ENCODE measurements at regions of chr20 and their contacts with region 1.

Region 1: DNA sequence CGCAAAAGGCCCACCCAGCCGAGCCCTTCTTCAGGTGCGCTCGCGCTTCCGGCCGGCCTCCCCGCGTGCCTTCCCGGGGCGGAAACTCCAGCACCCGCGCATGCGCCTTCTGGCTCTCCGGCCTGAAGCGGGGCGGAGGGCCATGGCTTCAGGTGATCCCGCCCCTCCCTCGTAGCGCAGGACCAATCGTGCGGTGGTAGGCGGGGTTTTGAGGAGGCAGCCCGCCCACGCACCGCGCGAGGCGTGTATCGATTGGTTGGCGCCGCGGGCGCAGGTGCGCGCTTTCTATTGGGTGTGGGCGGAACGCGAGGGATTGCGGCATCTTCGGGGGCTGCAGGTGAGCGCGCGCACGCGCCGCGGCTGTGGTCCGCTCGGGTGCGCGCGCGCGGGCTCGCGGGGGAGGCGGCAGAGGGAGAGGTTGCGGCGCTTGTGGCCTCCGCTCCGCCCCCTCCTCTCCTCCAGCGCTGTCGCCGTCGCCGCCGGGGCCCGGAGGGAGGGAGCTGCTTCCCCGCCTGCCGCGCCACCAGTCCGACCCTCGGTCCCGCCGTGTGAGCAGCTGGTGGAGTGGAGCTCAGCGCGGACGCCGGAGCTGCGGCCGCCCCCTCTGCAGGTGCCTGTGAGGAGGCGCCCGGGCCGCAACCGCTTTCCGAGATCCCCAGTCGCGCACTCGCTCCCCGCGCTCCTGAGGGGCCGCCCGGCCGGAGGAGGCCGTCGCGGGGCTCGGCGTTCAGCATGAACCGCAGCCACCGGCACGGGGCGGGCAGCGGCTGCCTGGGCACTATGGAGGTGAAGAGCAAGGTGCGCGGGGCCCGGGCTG is at the start of gene PARD6B:
- DNase-seq: peak; percentile 99 to 100 (median 100)
- H3K4me3 ChIP-seq: peak within 1 kb of the TSS; percentile 66 to 72
- H3K4me3 Mint-ChIP-seq: peak within 1 kb of the TSS; percentile 90 to 95 (median 92)
- H3K27ac ChIP-seq: peak within 1 kb of the TSS; percentile 55
- H3K27ac Mint-ChIP-seq: peak within 1 kb of the TSS; percentile 83 to 91 (median 87)
- H3K4me1 ChIP-seq: peaks cover 21% of the 10 kb centered on the region
- H3K4me1 Mint-ChIP-seq: peaks cover 16 to 37% (median 24%) of the 10 kb centered on the region in 4 donors
- H3K27me3 ChIP-seq: no peaks in the 10 kb centered on the region
- H3K27me3 Mint-ChIP-seq: no peaks in the 10 kb centered on the region
- total RNA-seq, gene PARD6B: 10.9 to 12.7 TPM

Region 2: DNA sequence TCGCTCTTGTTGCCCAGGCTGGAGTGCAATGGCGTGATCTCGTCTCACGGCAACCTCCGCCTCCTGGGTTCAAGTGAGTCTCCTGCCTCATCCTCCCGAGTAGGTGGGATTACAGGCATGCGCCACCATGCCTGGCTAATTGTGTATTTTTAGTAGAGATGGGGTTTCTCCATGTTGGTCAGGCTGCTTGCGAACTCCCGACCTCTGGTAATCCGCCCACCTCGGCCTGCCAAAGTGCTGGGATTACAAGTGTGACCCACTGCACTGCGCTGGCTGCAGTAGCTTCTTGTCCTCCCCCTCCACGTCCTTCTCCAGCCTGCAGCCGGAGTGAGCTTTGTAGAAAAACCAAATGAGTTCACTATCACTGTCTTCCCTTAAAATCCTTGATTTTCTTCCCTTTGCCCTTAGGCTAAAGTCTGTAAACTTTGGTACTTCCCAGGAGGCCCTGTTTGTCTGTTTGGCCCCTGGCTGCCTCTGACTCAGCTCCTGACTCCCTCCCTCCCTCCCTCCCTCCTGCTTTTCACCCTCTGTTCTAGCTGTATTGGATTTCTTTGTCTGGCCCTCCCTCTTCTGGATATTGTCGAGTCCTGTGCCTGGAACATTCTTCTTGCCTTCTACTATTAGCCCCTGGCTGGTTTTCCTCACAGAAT is 13.0 kb after region 1 on chr20:
- CTCF ChIA-PET with region 1: interaction called, 35 read pairs
- POLR2A ChIA-PET with region 1: interaction called, 6 read pairs
- intact Hi-C with region 1: loop called (anchors 2 kb)
- DNase-seq: no peak
- H3K4me3 ChIP-seq: no peak overlapping the region
- H3K4me3 Mint-ChIP-seq: no peak overlapping the region
- H3K27ac ChIP-seq: no peak overlapping the region
- H3K27ac Mint-ChIP-seq: peak overlapping the region in 2 of 7 donors; percentile 51 to 57
- H3K4me1 ChIP-seq: peaks cover 11% of the 10 kb centered on the region
- H3K4me1 Mint-ChIP-seq: peaks cover 6 to 27% (median 17%) of the 10 kb centered on the region in 4 donors
- H3K27me3 ChIP-seq: no peaks in the 10 kb centered on the region
- H3K27me3 Mint-ChIP-seq: no peaks in the 10 kb centered on the region